ENCODE measurements at regions of chr6 and their contacts with region 1.

Region 1: DNA sequence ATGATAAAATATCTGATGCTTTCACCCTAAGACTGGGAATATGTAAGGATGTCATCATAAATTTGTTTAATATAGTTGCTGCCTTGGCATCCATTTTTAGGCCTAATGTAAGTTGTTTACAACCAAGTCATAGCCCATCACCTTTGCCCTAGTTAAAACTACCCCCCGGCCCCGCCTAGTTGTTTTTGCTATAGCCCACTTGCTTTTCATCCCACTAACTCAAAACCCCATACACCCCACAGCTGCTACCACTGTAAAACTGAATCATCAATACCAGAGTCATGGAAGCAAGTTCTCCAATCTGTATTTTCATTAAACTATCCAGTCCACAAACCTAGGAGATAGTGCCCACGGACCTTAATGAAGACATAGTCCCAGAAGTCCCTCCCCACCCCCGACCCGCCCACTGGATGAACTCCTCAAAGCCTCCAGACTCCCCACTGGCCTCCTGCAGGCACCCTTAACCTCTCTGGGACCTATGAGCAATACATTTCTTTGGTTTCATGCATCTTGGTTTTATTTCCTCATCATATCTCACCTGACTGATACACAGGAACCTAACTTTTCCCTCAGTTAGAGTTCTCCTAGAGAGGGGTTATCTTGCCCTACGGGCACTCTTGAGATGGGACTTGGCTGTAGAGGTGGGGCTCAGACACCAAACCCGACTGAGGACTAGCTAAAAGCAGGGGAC is 12.5 kb upstream of the ZDHHC14 start:
- DNase-seq: no peak
- H3K4me3 Mint-ChIP-seq: no peak overlapping the region
- H3K27ac Mint-ChIP-seq: no peak overlapping the region
- H3K4me1 Mint-ChIP-seq: peaks cover 19% of the 10 kb centered on the region
- H3K27me3 Mint-ChIP-seq: peaks cover 57% of the 10 kb centered on the region

Region 2: DNA sequence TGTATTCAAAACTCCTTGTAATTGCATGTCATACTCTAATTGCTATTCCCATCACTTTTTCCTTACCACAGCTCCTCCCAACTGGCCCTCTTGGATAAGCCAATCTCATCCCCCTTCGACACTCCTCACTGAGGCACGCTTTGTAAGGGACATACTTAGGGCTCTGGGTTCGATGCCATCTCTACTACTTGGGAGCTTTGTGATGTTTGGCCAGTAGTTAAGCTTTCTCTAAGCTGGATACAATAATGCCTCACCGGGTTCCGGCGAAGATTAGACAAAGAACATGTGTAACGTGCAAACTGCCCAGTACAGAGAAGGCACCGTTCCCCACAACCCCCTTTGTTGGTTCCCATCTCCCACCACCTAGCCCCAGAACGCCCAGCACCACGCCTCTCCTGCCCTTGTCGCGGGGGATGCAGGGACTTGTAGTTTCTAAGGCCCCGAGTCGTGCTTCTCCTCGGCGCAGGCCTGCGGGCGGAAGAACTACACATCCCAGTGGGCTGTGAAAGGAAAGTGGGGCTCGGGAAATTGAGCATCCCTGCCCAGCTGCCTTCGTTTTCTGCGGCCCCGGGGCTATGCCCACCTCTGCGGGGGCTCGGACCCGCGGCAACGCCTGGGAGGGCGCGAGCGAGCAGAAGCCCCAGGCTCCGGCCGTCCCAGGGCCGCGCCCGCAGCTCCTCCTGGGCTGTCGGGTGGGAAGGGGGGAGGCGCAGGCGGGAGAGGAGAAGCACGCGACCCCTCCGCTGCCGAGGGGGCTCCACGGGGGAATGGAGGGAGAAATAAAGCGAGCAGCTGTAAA is 11.4 kb after region 1 on chr6:
- CTCF ChIA-PET with region 1: interaction called, 15 read pairs
- POLR2A ChIA-PET with region 1: interaction called, 3 read pairs
- DNase-seq: peak; percentile 93
- H3K4me3 Mint-ChIP-seq: peak overlapping the region; percentile 76
- H3K27ac Mint-ChIP-seq: peak overlapping the region; percentile 79
- H3K4me1 Mint-ChIP-seq: peaks cover 26% of the 10 kb centered on the region
- H3K27me3 Mint-ChIP-seq: peaks cover 14% of the 10 kb centered on the region